ENCODE measurements at regions of chr9 and their contacts with region 1.

Region 1: DNA sequence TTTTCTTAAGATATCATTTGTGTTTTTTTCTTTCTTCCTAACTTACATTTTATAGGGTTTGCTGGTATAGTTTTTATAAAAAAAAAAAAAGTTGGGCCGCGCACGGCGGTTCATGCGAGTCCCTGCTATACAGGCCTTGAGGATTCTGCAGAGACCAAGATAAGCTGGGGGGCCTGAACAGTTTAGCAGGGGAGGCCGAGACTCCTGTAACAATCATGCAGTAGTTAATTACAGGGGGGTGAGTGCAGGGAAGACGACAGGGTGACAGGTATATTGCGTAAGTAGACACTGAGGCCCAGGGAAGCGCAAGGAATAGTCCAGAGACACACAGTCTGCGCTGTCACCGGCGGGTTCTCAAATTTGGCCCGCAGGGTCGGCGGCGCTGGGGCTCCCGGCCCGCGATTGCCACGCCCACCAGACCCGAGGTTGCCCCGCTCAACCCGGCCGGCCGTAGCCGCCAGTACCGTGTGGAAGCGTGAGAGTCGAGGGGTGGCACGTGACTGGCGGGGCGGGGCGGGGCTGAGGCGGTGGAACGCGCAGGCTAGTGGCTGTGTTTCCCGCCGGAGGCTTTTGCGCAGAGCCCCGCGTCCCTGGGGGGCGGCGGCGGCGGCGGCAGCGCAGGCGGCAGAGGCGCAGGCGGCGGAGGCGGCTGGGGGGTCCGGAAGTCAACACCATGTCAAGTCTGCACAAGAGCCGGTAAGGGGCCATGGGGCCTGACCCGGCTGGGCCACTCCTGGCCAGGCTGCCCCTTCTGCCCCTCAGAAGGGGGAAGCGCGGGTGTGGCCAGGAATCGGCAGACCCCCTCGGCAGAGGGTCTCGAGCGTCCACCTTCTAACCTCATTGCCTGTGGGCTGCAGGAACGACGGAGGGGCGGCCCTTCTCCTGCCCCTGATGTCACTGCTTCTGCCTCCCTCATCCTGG is at the start of gene TBC1D13:
- DNase-seq: peak; percentile 92 to 95
- ATAC-seq: peak; percentile 94 to 97 (median 96)
- H3K4me3 ChIP-seq: peak within 1 kb of the TSS; percentile 98
- H3K27ac ChIP-seq: peak within 1 kb of the TSS; percentile 90
- H3K4me1 ChIP-seq: peaks cover 21% of the 10 kb centered on the region
- H3K27me3 ChIP-seq: no peaks in the 10 kb centered on the region
- CTCF ChIP-seq: no peak
- total RNA-seq, gene TBC1D13: 14.4 to 17.5 (median 15.8) TPM

Region 2: GRCh38 chr9:127828262-127829031 is 958.5 kb before region 1 on chr9:
- intact Hi-C with region 1: loop called in 1 of 2 experiments (anchors 5 kb)
- DNase-seq: peak; percentile 91 to 94
- ATAC-seq: peak; percentile 70 to 85 (median 80)
- H3K4me3 ChIP-seq: peak overlapping the region; percentile 59
- H3K27ac ChIP-seq: peak overlapping the region; percentile 76
- H3K4me1 ChIP-seq: peaks cover 38% of the 10 kb centered on the region
- H3K27me3 ChIP-seq: no peaks in the 10 kb centered on the region
- CTCF ChIP-seq: peak; percentile 16